AG04449 (cell line): ENCODE measurements at regions of chr12 and their contacts with region 1.

Region 1: GRCh38 chr12:64550755-64551154 is 59.5 kb upstream of the RASSF3 start:
- DNase-seq: no peak
- H3K4me3 ChIP-seq: no peak overlapping the region
- CTCF ChIP-seq: no peak

Region 2: DNA sequence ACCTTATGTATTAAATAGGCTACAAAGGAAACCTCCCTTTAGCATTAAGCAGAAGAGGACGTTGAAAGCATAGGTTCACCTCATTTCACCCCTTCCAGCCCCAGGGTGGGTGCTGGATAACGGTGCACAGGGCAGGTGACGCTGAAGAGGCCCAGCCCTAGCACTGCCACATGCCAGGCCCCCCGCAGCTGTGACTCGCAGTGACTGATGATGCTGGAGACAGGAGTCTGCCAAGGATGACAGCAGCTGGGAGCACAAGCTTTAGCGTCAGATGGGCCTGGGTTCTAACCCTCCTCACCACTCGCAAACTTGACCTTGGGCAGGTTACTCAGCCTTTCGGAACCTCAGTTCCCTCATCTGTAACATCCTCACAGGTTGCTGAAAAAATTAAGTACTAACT is 22.1 kb before region 1 on chr12:
- CTCF ChIA-PET with region 1: interaction called, 26 read pairs
- POLR2A ChIA-PET with region 1: no interaction called
- DNase-seq: no peak
- H3K4me3 ChIP-seq: no peak overlapping the region
- CTCF ChIP-seq: no peak

Region 3: DNA sequence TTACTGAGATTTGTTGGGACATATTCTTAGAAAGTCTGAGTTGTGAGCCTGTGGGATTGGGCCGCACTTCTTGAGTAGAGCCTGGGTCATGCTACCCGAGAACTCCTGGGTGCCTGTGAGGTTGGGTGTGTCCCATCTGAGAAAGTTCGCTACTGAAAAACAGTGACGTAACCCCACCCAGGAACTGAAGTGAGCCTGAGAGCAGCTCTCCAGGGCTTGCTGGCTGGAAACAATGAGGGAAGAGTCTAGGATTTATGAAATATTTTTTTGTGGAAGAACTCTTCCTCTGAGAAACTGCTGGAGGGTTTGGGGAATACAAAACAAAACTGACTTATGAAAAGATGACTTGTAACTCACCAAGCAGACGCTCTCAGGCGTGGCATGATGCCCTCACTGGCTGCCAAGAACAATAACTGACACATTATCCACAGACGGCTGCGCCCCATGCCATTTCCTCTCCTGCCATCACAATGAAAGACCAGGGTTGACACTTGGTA is 128.8 kb after region 1 on chr12:
- CTCF ChIA-PET with region 1: interaction called, 15 read pairs
- POLR2A ChIA-PET with region 1: no interaction called
- DNase-seq: no peak
- H3K4me3 ChIP-seq: peak overlapping the region; percentile 29
- CTCF ChIP-seq: no peak

Region 4: DNA sequence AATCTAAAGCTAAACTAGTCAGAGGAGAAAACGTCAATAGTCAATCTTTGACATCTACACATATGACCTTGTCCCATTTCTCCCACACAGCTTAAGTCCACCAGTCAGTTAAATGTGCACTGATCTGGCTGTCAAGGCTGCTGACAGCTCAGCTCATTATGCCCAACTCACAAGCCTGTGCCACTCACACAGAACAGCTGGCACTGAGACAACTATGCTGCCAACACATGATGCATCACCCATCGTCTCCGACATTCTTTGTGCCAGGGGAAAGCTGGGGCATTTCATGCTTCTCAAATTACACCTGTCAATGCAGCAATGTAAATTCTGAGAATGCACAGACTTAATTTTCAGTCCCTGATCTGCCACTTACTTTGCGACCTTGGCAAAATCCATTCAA is 183.1 kb after region 1 on chr12:
- CTCF ChIA-PET with region 1: interaction called, 14 read pairs
- POLR2A ChIA-PET with region 1: no interaction called
- DNase-seq: no peak
- H3K4me3 ChIP-seq: no peak overlapping the region
- CTCF ChIP-seq: no peak